MCF 10A (cell line): ENCODE measurements at regions of chr14 and their contacts with region 1.

Region 1: DNA sequence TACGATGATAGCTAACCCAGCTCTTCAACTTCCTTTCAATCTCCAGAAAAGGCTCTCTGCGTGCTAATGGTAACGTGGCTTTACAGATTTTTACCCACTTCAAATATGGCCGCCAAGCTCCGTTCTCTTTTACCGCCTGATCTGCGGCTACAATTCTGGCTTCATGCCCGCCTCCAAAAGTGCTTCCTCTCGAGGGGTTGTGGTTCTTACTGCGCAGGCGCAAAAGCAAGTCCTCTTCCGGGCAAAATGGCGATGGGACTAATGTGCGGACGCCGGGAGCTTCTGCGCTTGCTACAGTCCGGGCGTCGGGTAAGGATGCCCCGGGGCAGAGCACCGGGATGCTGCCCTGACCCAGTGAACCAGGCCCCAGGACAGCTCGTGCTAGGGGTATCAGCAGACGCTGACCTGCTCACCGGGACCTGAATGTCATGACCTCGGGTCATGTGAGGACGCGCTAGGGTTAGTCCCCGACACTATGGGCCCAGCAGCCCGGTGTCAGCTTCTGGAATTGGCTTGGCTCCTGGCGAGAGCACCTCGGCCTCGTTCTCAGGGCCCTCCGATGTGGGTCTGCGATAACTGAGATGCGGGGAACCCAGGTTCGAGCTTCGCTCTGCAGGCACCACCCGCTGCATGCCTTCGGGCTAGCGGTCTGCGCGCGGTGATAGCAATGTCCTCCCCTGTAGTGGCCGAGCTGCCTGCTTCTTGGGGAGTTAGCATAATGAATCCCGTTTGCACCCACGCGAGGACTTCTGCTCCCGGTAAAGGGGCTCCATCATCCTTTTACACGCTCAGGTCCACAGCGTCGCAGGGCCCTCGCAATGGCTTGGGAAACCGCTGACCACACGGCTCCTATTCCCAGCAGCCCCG is at the start of gene OXA1L:
- DNase-seq: peak; percentile 99
- H3K4me3 Mint-ChIP-seq: peak within 1 kb of the TSS; percentile 91
- H3K27ac Mint-ChIP-seq: peak within 1 kb of the TSS; percentile 99
- H3K4me1 Mint-ChIP-seq: peaks cover 21% of the 10 kb centered on the region
- H3K27me3 Mint-ChIP-seq: no peaks in the 10 kb centered on the region
- CTCF ChIP-seq: no peak
- total RNA-seq, gene OXA1L: 100 and 103 TPM in 2 replicates

Region 2: GRCh38 chr14:22589096-22589839 is 177.4 kb before region 1 on chr14 and contains the start of gene DAD1:
- CTCF ChIA-PET with region 1: no interaction called
- POLR2A ChIA-PET with region 1: interaction called, 11 read pairs
- intact Hi-C with region 1: no loop called
- DNase-seq: peak; percentile 99
- H3K4me3 Mint-ChIP-seq: peak within 1 kb of the TSS; percentile 92
- H3K27ac Mint-ChIP-seq: peak within 1 kb of the TSS; percentile 96
- H3K4me1 Mint-ChIP-seq: peaks cover 21% of the 10 kb centered on the region
- H3K27me3 Mint-ChIP-seq: peaks cover 25% of the 10 kb centered on the region
- CTCF ChIP-seq: no peak
- total RNA-seq, gene DAD1: 166 and 210 TPM in 2 replicates

Region 3: GRCh38 chr14:22653012-22653621 is 113.6 kb before region 1 on chr14:
- CTCF ChIA-PET with region 1: interaction called, 10 read pairs
- POLR2A ChIA-PET with region 1: interaction called, 11 read pairs
- intact Hi-C with region 1: no loop called
- DNase-seq: peak; percentile 87
- H3K4me3 Mint-ChIP-seq: no peak overlapping the region
- H3K27ac Mint-ChIP-seq: no peak overlapping the region
- H3K4me1 Mint-ChIP-seq: peaks cover 10% of the 10 kb centered on the region
- H3K27me3 Mint-ChIP-seq: no peaks in the 10 kb centered on the region
- CTCF ChIP-seq: peak; percentile 84

Region 4: DNA sequence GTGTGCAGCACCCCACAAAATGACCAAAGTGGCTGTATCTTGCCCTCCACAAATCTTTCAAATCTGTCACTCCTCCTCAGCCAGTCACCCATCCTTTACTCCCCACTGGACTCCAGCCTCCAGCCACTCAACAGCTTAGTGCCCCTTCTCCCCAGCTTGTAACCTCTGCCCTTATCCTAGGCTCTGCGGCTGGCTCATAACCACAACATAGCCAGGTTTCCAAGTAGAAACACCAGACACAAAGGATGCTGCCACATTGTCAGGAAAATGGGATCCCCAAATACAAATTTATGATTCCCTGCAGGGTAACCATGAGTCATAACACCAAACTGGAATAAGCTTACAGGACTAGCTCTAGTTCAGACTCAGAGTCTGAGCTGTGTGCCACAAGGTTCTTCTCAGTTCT is 14.9 kb after region 1 on chr14:
- CTCF ChIA-PET with region 1: interaction called, 11 read pairs
- POLR2A ChIA-PET with region 1: interaction called, 5 read pairs
- intact Hi-C with region 1: no loop called
- DNase-seq: no peak
- H3K4me3 Mint-ChIP-seq: no peak overlapping the region
- H3K27ac Mint-ChIP-seq: no peak overlapping the region
- H3K4me1 Mint-ChIP-seq: no peaks in the 10 kb centered on the region
- H3K27me3 Mint-ChIP-seq: no peaks in the 10 kb centered on the region
- CTCF ChIP-seq: no peak

Region 5: GRCh38 chr14:22829661-22830442 is 63.2 kb after region 1 on chr14 and contains the start of gene MRPL52:
- CTCF ChIA-PET with region 1: interaction called, 3 read pairs
- POLR2A ChIA-PET with region 1: interaction called, 18 read pairs
- intact Hi-C with region 1: no loop called
- DNase-seq: peak; percentile 88
- H3K4me3 Mint-ChIP-seq: peak within 1 kb of the TSS; percentile 95
- H3K27ac Mint-ChIP-seq: peak within 1 kb of the TSS; percentile 76
- H3K4me1 Mint-ChIP-seq: peaks cover 9% of the 10 kb centered on the region
- H3K27me3 Mint-ChIP-seq: no peaks in the 10 kb centered on the region
- CTCF ChIP-seq: no peak
- total RNA-seq, gene MRPL52: 172 and 186 TPM in 2 replicates

Region 6: GRCh38 chr14:23468704-23469126 is 702.0 kb after region 1 on chr14:
- CTCF ChIA-PET with region 1: no interaction called
- POLR2A ChIA-PET with region 1: no interaction called
- intact Hi-C with region 1: no loop called
- DNase-seq: no peak
- H3K4me3 Mint-ChIP-seq: no peak overlapping the region
- H3K27ac Mint-ChIP-seq: no peak overlapping the region
- H3K4me1 Mint-ChIP-seq: peaks cover 6% of the 10 kb centered on the region
- H3K27me3 Mint-ChIP-seq: no peaks in the 10 kb centered on the region
- CTCF ChIP-seq: no peak